Activated CD4-positive, alpha-beta memory T cell treated with anti-CD3 and anti-CD28 coated beads for 36 hours (primary cell): ENCODE measurements at regions of chr21 and their contacts with region 1.

Region 1: GRCh38 chr21:31098576-31099005 is 60.3 kb upstream of the KRTAP19-8 start:
- DNase-seq: peak; percentile 83
- H3K4me3 Mint-ChIP-seq: peak overlapping the region; percentile 20
- H3K27ac Mint-ChIP-seq: no peak overlapping the region
- H3K4me1 Mint-ChIP-seq: peaks cover 26% of the 10 kb centered on the region
- H3K27me3 Mint-ChIP-seq: peaks cover 3% of the 10 kb centered on the region

Region 2: GRCh38 chr21:31132574-31133242 is 34.1 kb after region 1 on chr21:
- CTCF ChIA-PET with region 1: interaction called, 3 read pairs
- POLR2A ChIA-PET with region 1: no interaction called
- intact Hi-C with region 1: loop called (anchors 2 kb)
- DNase-seq: peak; percentile 82
- H3K4me3 Mint-ChIP-seq: peak overlapping the region; percentile 64
- H3K27ac Mint-ChIP-seq: peak overlapping the region; percentile 95
- H3K4me1 Mint-ChIP-seq: peaks cover 65% of the 10 kb centered on the region
- H3K27me3 Mint-ChIP-seq: no peaks in the 10 kb centered on the region

Region 3: GRCh38 chr21:31185663-31186062 is 87.1 kb after region 1 on chr21:
- CTCF ChIA-PET with region 1: interaction called, 29 read pairs
- POLR2A ChIA-PET with region 1: no interaction called
- intact Hi-C with region 1: loop called (anchors 1 kb)
- DNase-seq: peak; percentile 48
- H3K4me3 Mint-ChIP-seq: peak overlapping the region; percentile 67
- H3K27ac Mint-ChIP-seq: peak overlapping the region; percentile 85
- H3K4me1 Mint-ChIP-seq: peaks cover 78% of the 10 kb centered on the region
- H3K27me3 Mint-ChIP-seq: no peaks in the 10 kb centered on the region

Region 4: GRCh38 chr21:31580866-31581276 is 482.3 kb after region 1 on chr21:
- CTCF ChIA-PET with region 1: interaction called, 45 read pairs
- POLR2A ChIA-PET with region 1: no interaction called
- intact Hi-C with region 1: loop called (anchors 1 kb)
- DNase-seq: peak; percentile 84
- H3K4me3 Mint-ChIP-seq: no peak overlapping the region
- H3K27ac Mint-ChIP-seq: no peak overlapping the region
- H3K4me1 Mint-ChIP-seq: peaks cover 4% of the 10 kb centered on the region
- H3K27me3 Mint-ChIP-seq: peaks cover 3% of the 10 kb centered on the region